Lower leg skin (tissue), 4 donors: ENCODE measurements at regions of chr3 and their contacts with region 1.

Region 1: GRCh38 chr3:57755668-57756527 is at the start of gene SLMAP:
- DNase-seq: peak; percentile 97 to 99
- H3K4me3 ChIP-seq: peak within 1 kb of the TSS; percentile 77
- CTCF ChIP-seq: no peak
- POLR2A ChIP-seq: no peak
- total RNA-seq, gene SLMAP: 49.5 to 56.0 (median 51.0) TPM

Region 2: DNA sequence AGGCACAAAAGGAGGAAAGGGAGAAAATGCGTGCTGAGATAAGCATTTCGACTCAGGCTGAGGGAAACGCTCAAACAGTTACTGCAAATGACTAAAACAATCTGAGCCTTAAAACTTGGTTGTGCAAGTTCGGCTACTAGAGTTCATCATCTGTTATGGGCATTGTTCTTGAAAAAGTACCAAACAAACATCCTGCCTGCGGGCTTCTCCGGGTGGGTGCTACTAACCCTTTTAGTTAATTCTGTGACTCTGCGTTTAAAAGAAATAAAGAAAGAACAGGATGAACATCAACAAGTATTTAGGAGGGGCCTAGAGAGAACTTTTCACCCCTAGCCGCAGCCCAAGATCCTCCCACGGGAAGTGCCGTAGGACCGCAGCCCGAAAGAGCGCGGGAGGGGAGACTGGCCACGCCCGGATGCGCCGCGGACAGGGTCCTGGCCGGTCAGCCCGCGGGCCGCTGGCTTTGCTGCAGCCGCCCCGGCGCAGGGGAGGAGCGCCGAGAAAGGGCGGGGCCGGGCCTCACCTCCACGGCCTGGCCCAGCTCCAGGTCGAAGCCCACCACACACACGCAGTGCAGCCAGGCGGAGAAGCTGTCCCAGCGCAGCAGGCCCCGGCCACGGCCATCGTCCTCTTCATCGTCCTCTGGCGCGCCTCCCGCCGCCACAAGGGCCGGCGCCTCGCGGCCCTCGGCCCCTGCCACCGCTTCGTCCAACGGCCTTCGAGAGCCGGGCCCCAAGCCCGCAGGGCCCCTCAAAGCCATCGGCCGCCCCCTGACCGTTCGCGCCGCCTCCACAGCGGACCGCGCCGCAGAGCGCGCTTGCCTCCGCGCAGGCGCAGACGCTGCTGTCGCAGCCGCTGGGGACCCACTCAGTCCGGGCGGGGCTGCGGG is 63.4 kb before region 1 on chr3 and contains the start of gene DENND6A:
- intact Hi-C with region 1: loop called (anchors 5 kb)
- DNase-seq: peak; percentile 95 to 99
- H3K4me3 ChIP-seq: peak within 1 kb of the TSS; percentile 94
- CTCF ChIP-seq: no peak
- POLR2A ChIP-seq: peak in 1 of 2 donors; percentile 92
- total RNA-seq, gene DENND6A: 16.1 to 38.2 (median 24.7) TPM